ENCODE measurements at regions of chr17 and their contacts with region 1.

Region 1: DNA sequence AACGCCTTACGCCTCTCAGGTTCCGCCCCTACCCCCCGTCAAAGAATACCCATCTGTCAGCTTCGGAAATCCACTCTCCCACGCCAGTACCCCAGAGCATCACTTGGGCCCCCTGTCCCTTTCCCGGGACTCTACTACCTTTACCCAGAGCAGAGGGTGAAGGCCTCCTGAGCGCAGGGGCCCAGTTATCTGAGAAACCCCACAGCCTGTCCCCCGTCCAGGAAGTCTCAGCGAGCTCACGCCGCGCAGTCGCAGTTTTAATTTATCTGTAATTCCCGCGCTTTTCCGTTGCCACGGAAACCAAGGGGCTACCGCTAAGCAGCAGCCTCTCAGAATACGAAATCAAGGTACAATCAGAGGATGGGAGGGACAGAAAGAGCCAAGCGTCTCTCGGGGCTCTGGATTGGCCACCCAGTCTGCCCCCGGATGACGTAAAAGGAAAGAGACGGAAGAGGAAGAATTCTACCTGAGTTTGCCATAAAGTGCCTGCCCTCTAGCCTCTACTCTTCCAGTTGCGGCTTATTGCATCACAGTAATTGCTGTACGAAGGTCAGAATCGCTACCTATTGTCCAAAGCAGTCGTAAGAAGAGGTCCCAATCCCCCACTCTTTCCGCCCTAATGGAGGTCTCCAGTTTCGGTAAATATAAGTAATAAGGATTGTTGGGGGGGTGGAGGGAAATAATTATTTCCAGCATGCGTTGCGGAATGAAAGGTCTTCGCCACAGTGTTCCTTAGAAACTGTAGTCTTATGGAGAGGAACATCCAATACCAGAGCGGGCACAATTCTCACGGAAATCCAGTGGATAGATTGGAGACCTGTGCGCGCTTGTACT is at the start of gene BRCA1:
- DNase-seq: peak; percentile 93
- H3K4me3 Mint-ChIP-seq: peak within 1 kb of the TSS; percentile 99
- H3K27ac Mint-ChIP-seq: peak within 1 kb of the TSS; percentile 99
- H3K4me1 Mint-ChIP-seq: peaks cover 24% of the 10 kb centered on the region
- H3K27me3 Mint-ChIP-seq: no peaks in the 10 kb centered on the region
- total RNA-seq, gene BRCA1: 76.1 and 79.8 TPM in 2 replicates

Region 2: GRCh38 chr17:42577532-42578281 is 547.6 kb before region 1 on chr17 and contains the start of gene PSMC3IP:
- intact Hi-C with region 1: loop called (anchors 10 kb)
- DNase-seq: peak; percentile 92
- H3K4me3 Mint-ChIP-seq: peak within 1 kb of the TSS; percentile 98
- H3K27ac Mint-ChIP-seq: peak within 1 kb of the TSS; percentile 96
- H3K4me1 Mint-ChIP-seq: peaks cover 47% of the 10 kb centered on the region
- H3K27me3 Mint-ChIP-seq: no peaks in the 10 kb centered on the region
- total RNA-seq, gene PSMC3IP: 27.6 and 31.5 TPM in 2 replicates

Region 3: GRCh38 chr17:42798383-42799380 is 326.7 kb before region 1 on chr17 and contains the starts of genes CNTD1 and COA3:
- intact Hi-C with region 1: no loop called
- DNase-seq: peak; percentile 73
- H3K4me3 Mint-ChIP-seq: peak within 1 kb of the TSS; percentile 90
- H3K27ac Mint-ChIP-seq: peak within 1 kb of the TSS; percentile 56
- H3K4me1 Mint-ChIP-seq: peaks cover 19% of the 10 kb centered on the region
- H3K27me3 Mint-ChIP-seq: peaks cover 3% of the 10 kb centered on the region
- total RNA-seq, gene CNTD1: not detected in 2 replicates
- total RNA-seq, gene COA3: 53.5 and 59.3 TPM in 2 replicates

Region 4: GRCh38 chr17:42964161-42964932 is 161.0 kb before region 1 on chr17 and contains the start of gene AARSD1:
- intact Hi-C with region 1: loop called (anchors 1 kb)
- DNase-seq: peak; percentile 90
- H3K4me3 Mint-ChIP-seq: peak within 1 kb of the TSS; percentile 94
- H3K27ac Mint-ChIP-seq: peak within 1 kb of the TSS; percentile 90
- H3K4me1 Mint-ChIP-seq: peaks cover 13% of the 10 kb centered on the region
- H3K27me3 Mint-ChIP-seq: no peaks in the 10 kb centered on the region
- total RNA-seq, gene AARSD1: 78.2 and 85.5 TPM in 2 replicates

Region 5: DNA sequence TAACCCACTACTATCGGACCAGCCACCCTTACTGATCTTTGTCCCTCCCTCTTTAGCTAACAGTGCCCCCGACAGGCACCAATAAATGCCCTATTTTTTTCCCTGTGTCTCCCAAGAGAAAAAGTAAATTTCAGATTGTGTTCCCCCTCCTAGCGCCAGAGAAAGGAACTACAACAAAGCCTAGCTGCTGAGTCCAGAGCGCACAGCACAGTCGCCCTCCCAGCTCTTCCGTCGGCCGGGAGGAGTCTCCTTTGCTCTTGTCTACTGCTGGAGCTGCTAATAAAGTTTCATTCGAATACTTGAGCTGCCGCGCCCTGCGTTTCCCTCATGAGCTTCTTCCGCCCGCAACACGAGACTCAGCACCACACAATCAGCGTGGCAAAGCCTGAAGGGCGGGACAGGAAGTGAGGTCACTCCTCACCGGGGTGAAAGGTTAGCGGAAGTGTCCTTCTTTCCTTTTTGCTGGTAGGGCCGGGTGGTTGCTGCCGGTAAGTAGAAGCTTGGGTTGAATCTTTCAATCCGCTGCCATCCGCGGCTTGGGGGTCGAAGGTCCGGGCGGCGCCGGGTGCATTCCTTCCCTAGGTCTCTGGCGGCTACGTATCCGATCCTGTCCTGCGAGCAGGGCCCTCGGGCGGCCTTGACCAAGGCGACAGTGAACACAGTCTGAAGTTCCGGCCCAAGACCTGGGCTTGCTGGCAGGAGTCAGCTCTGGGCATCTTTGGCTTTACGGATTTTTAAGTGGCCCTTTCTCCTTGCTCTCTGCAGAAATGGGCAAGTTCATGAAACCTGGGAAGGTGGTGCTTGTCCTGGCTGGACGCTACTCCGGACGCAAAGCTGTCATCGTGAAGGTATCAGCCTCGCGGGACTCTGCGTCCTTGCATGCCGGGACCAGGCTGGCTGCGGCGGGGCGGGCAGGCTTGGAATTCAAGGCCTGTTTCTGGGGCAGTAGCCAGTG is 127.1 kb before region 1 on chr17 and contains the start of gene RPL27:
- intact Hi-C with region 1: loop called (anchors 1 kb)
- DNase-seq: peak; percentile 95
- H3K4me3 Mint-ChIP-seq: peak within 1 kb of the TSS; percentile 94
- H3K27ac Mint-ChIP-seq: peak within 1 kb of the TSS; percentile 96
- H3K4me1 Mint-ChIP-seq: peaks cover 23% of the 10 kb centered on the region
- H3K27me3 Mint-ChIP-seq: no peaks in the 10 kb centered on the region
- total RNA-seq, gene RPL27: 1,049 and 1,126 TPM in 2 replicates

Region 6: DNA sequence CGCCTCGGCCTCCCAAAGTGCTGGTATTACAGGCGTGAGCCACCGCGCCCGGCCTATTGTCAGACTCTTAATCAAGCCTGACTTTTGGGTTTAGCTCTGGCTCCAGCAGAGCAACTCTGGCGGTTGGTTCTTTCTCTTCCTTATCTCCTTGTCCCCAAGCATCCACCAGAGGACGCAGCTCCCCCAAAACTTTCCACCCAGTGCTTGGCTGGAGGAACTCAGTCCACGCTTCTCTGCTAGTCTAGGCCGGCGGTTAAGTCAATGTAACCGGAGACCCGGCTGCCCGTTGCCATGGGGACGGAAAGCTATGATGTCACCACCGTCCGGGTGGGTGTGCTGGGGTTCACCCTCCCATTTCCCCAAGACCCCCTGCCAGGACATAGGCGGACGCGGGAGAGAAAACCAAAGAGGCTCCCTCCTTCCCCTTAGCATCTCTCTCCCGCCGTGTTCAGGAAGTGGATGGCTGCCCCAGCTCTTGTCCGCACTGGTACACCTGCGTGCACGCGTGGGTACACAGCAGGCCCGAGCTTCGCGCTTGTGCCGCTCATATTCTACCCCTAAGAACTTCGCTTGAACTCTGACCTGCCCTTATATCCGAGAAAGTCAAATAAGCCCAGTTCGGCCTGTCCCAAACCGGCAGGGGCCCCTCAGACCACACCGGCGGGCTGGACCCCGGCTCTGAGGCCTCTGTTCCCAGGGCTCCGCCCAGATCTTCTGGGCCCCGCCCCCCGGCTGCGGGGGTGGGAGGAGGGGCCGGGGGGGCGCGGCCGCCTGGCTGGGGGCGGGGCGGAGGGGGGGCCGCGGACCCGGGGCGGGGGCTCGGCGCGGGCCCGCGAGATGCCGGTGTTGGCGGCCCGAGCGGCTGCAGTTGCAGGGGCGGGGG is 100.7 kb before region 1 on chr17 and contains the start of gene RND2:
- intact Hi-C with region 1: loop called (anchors 1 kb)
- DNase-seq: peak; percentile 73
- H3K4me3 Mint-ChIP-seq: peak within 1 kb of the TSS; percentile 90
- H3K27ac Mint-ChIP-seq: peak within 1 kb of the TSS; percentile 84
- H3K4me1 Mint-ChIP-seq: peaks cover 16% of the 10 kb centered on the region
- H3K27me3 Mint-ChIP-seq: peaks cover 25% of the 10 kb centered on the region
- total RNA-seq, gene RND2: 0.07 TPM in 1 of 2 replicates, not detected in the other

Region 7: GRCh38 chr17:43316522-43317142 is 191.3 kb after region 1 on chr17:
- intact Hi-C with region 1: loop called (anchors 1 kb)
- DNase-seq: peak; percentile 38
- H3K4me3 Mint-ChIP-seq: no peak overlapping the region
- H3K27ac Mint-ChIP-seq: peak overlapping the region; percentile 77
- H3K4me1 Mint-ChIP-seq: peaks cover 24% of the 10 kb centered on the region
- H3K27me3 Mint-ChIP-seq: peaks cover 2% of the 10 kb centered on the region